HEK293 (cell line): ENCODE measurements at regions of chr18 and their contacts with region 1.

Region 1: GRCh38 chr18:63963615-63964256 is 6.1 kb upstream of the SERPINB8 start:
- H3K4me3 ChIP-seq: no peak overlapping the region
- H3K27ac ChIP-seq: no peak overlapping the region
- H3K4me1 ChIP-seq: no peaks in the 10 kb centered on the region
- CTCF ChIP-seq: 0 out of 2 replicates have a peak, but pooled peaks have one; percentile 22

Region 2: GRCh38 chr18:63907664-63908063 is 56.1 kb before region 1 on chr18 and contains the start of gene SERPINB10:
- CTCF ChIA-PET with region 1: no interaction called
- POLR2A ChIA-PET with region 1: no interaction called
- H3K4me3 ChIP-seq: no peak within 1 kb of the TSS
- H3K27ac ChIP-seq: no peak within 1 kb of the TSS
- H3K4me1 ChIP-seq: no peaks in the 10 kb centered on the region
- CTCF ChIP-seq: no peak

Region 3: DNA sequence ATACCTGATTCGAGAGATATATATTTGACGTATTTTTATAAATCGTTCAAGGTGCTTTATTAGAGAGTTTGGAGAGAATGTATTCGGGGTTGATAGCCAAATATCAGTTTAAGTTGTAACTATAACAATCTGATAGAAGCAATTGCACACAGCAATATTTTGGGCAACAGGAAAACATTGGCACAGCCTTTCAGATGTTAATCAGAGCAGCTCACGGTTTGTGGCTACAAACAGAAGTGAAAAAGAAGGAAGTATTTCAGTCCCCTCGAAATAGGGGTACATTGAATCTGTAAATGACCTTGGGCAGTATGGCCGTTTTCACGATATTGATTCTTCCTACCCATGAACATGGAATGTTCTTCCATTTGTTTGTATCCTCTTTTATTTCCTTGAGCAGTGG is 35.4 kb before region 1 on chr18:
- CTCF ChIA-PET with region 1: no interaction called
- POLR2A ChIA-PET with region 1: no interaction called
- H3K4me3 ChIP-seq: no peak overlapping the region
- H3K27ac ChIP-seq: no peak overlapping the region
- H3K4me1 ChIP-seq: no peaks in the 10 kb centered on the region
- CTCF ChIP-seq: no peak

Region 4: DNA sequence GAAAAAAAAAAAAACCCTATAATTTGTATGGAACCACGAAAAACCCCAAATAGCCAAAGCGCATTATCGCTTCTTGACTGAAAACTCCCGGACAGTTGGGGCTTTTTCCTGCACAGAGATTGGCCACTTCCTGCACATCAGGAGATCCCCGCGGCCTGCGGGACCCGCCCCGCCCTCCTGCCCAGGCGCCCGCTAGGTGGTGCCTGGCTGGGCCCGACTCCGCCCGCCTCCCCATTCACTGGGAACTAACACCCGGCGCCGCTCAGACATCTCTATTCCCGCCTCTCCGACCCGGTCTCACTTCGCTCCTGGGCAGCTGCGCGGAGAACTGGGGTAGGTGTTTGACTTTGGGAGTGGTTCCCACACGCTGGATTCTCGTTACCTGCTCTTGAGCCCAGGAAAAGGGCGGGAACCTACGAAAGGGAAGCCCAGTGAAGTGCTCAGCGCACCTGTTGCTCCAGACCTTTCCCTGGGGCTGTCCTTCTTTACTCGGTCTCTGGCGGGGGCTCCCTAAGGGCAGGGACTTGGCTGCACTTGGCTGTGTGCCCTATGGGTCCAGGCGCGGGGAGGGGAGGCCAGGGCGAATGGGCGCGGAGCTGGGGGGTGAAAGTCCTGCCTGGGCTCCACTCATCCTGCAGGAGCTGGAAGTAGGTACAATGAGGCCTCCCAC is 14.5 kb before region 1 on chr18 and contains the start of gene HMSD:
- CTCF ChIA-PET with region 1: interaction called, 39 read pairs
- POLR2A ChIA-PET with region 1: no interaction called
- H3K4me3 ChIP-seq: peak within 1 kb of the TSS; percentile 32
- H3K27ac ChIP-seq: peak within 1 kb of the TSS; percentile 58
- H3K4me1 ChIP-seq: no peaks in the 10 kb centered on the region
- CTCF ChIP-seq: 0 out of 2 replicates have a peak, but pooled peaks have one; percentile 31

Region 5: DNA sequence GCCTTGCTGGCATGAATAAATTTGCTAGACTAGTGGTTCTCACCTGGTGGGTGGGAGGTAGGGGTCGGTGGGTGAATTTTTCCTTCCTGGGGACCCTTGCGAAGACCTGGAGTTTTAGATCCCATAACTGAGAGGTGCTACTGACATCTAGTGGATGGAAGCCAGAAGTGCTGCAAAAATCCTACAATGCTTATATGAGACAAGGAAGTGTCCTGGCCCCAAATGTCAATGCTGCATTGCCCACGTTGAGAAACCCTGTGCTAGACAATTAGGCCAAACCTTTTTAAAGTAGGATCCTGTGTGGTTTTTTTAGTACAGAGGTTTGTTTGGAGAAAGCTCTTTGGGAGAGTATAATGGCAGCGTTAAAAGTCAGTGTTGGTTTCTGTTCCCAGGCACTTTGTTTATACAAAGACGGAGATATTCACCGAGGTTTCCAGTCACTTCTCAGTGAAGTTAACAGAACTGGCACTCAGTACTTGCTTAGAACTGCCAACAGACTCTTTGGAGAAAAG is 15.7 kb after region 1 on chr18:
- CTCF ChIA-PET with region 1: interaction called, 42 read pairs
- POLR2A ChIA-PET with region 1: no interaction called
- H3K4me3 ChIP-seq: no peak overlapping the region
- H3K27ac ChIP-seq: no peak overlapping the region
- H3K4me1 ChIP-seq: no peaks in the 10 kb centered on the region
- CTCF ChIP-seq: peak; percentile 52; the same call in 1 of the 2 replicates

Region 6: GRCh38 chr18:64146341-64146740 is 182.6 kb after region 1 on chr18:
- CTCF ChIA-PET with region 1: no interaction called
- POLR2A ChIA-PET with region 1: no interaction called
- H3K4me3 ChIP-seq: no peak overlapping the region
- H3K27ac ChIP-seq: no peak overlapping the region
- H3K4me1 ChIP-seq: no peaks in the 10 kb centered on the region
- CTCF ChIP-seq: no peak